ENCODE measurements at regions of chr2 and their contacts with region 1.

Region 1: GRCh38 chr2:149017116-149017985 is 21.1 kb upstream of the LYPD6B start:
- DNase-seq: peak; percentile 67 to 85 (median 79)
- ATAC-seq: peak; percentile 84 to 93 (median 92)
- H3K4me3 ChIP-seq: no peak overlapping the region
- H3K27ac ChIP-seq: no peak overlapping the region
- H3K4me1 ChIP-seq: no peaks in the 10 kb centered on the region
- H3K27me3 ChIP-seq: no peaks in the 10 kb centered on the region
- CTCF ChIP-seq: peak; percentile 81 to 86 (median 83)

Region 2: GRCh38 chr2:149313512-149313972 is 296.2 kb after region 1 on chr2:
- intact Hi-C with region 1: loop called in 1 of 3 experiments (anchors 5 kb)
- DNase-seq: peak in 3 of 6 donors; percentile 26 to 51 (median 32)
- ATAC-seq: peak; percentile 83 to 98 (median 96)
- H3K4me3 ChIP-seq: no peak overlapping the region
- H3K27ac ChIP-seq: no peak overlapping the region
- H3K4me1 ChIP-seq: no peaks in the 10 kb centered on the region
- H3K27me3 ChIP-seq: no peaks in the 10 kb centered on the region
- CTCF ChIP-seq: peak; percentile 72 to 79 (median 74)

Region 3: DNA sequence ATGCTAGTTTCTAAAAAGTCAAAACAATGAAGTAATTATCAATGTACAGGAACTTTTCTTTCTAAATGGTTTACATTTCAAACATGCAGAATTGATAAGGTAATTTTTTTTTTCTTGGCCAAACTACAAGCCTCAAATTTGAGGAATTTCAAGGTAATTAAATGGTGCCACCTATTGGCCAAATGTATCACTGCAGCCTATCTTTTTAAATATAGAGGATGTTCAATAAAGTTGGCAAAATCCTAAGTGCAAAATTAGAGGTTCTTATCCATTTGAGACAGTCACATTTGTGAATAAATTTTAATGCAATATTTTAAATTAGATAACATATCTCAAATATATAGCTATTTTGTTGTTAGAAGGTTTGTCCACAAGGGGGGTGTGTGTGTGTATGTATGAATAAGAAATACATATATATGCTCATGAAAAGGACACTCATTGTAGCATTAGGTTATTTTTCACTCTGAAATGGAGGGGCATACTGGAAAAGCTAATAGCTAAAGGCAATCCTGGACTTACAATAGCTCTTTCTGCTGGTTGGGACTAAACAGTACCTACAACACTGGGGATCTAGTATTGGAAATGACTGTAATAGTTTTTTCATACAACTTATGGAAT is 544.1 kb after region 1 on chr2:
- intact Hi-C with region 1: loop called in 2 of 3 experiments (anchors 5 kb)
- DNase-seq: no peak
- ATAC-seq: peak; percentile 49 to 80 (median 72)
- H3K4me3 ChIP-seq: no peak overlapping the region
- H3K27ac ChIP-seq: peak overlapping the region in 1 of 4 donors; percentile 25
- H3K4me1 ChIP-seq: peaks cover 0 to 11% (median 9%) of the 10 kb centered on the region in 3 donors
- H3K27me3 ChIP-seq: no peaks in the 10 kb centered on the region
- CTCF ChIP-seq: peak; percentile 44 to 90 (median 88)

Region 4: GRCh38 chr2:149568138-149568537 is 550.8 kb after region 1 on chr2:
- intact Hi-C with region 1: loop called in 2 of 3 experiments (anchors 5 kb)
- DNase-seq: no peak
- ATAC-seq: no peak
- H3K4me3 ChIP-seq: no peak overlapping the region
- H3K27ac ChIP-seq: no peak overlapping the region
- H3K4me1 ChIP-seq: no peaks in the 10 kb centered on the region
- H3K27me3 ChIP-seq: no peaks in the 10 kb centered on the region
- CTCF ChIP-seq: no peak